Adrenal gland (tissue), 19 donors: ENCODE measurements at regions of chr9 and their contacts with region 1.

Region 1: DNA sequence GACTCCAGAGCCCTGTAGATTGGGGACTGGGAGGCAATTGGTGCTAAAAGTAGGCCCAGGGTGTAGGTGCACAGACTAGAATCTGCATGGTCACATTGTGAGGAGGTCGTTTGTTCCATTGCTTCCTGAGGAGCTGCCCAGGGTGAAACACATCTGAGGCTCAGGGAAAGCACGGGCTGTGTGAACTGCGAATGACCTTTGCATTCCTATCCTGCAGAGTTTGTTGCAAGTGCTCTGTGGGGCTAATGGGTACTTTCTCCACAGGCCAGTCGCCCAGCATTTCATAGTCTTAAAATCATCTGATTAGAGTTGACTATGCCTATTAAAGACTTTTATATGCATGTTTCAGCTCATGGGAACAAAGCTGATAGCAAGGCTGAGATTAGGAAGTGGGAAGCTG is 14.4 kb upstream of the SLC46A2 start:
- DNase-seq: no peak
- H3K4me3 ChIP-seq: no peak overlapping the region
- H3K27ac ChIP-seq: no peak overlapping the region
- H3K4me1 ChIP-seq: no peaks in the 10 kb centered on the region
- H3K27me3 ChIP-seq: no peaks in the 10 kb centered on the region
- CTCF ChIP-seq: no peak
- POLR2A ChIP-seq: no peak

Region 2: DNA sequence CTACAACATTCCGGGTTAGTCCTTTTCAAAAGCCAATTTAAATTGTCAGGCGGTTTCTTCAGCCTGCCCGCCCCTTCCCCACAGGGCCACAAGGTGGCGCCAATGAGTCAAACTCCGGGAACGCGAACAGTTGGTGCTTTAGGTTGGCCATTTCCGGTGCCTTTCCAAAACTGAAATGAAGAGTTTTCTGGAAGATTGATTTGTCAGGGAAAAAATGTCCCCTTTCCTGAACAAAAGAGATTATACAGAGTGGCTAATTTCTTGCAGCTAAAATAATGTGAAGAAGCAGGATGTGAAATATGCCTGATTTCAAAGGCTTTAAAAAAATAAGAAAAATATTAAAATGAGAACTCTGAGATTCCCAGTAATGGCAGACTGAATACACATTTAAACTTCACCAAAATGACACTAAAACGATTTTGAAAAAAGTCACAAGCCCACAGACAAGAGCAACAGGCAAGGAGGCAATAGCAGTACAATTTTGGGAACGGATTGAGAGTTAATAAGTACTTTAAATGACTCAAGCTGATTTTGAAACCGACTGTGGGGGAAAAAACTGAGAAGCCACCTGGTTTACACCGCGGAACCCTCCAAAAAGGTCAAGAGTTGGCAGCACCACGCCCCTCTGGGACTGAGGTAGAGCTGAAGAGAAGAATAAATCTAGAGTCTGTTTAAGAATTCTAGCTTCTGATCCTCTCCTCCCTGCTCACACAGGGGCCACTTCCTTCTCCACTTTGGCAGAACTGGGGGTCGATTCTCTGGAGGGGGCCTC is 60.1 kb before region 1 on chr9:
- intact Hi-C with region 1: loop called (anchors 5 kb)
- DNase-seq: peak; percentile 66 to 91 (median 77)
- H3K4me3 ChIP-seq: no peak overlapping the region
- H3K27ac ChIP-seq: no peak overlapping the region
- H3K4me1 ChIP-seq: peaks cover 0 to 5% of the 10 kb centered on the region in 2 donors
- H3K27me3 ChIP-seq: no peaks in the 10 kb centered on the region
- CTCF ChIP-seq: peak; percentile 85 to 99 (median 90)
- POLR2A ChIP-seq: no peak